ENCODE measurements at regions of chr6 and their contacts with region 1.

Region 1: DNA sequence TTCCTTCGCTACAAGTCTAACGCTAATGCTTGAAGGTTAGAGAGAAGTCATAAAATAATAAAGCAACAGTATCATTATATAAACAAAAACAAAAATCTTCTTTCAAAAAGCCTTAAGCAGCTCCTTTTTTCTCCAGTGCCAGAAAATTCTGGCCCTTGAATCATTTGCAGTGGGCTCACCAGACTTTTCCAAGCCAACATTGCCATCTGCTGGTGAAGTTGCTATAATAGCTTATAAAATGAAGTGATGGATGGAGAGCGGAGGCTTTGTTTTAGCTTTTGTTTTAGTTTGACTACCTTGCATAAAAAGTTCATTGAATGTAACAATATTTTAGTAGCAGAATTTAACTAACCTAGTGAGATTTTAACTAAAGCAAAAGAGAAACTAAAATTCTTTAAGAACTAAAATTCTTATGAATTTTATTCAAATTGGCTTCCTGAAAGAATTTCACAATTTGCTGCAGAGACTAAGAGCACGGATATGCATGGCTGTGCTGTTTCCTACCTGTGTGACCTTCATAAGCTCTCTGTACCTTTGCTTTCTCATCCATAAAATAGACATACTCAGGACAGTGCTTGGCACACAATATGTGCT is 44.8 kb upstream of the SLC2A12 start:
- DNase-seq: peak; percentile 11
- H3K4me3 ChIP-seq: no peak overlapping the region
- H3K27ac ChIP-seq: no peak overlapping the region
- H3K4me1 ChIP-seq: no peaks in the 10 kb centered on the region
- H3K27me3 ChIP-seq: no peaks in the 10 kb centered on the region
- CTCF ChIP-seq: peak; percentile 32 to 60 (median 52)

Region 2: GRCh38 chr6:133923938-133924593 is 173.1 kb before region 1 on chr6:
- dilution Hi-C with region 1: loop called (anchors 10 kb)
- DNase-seq: peak; percentile 33
- H3K4me3 ChIP-seq: no peak overlapping the region
- H3K27ac ChIP-seq: no peak overlapping the region
- H3K4me1 ChIP-seq: no peaks in the 10 kb centered on the region
- H3K27me3 ChIP-seq: no peaks in the 10 kb centered on the region
- CTCF ChIP-seq: peak; percentile 59 to 81 (median 60)

Region 3: GRCh38 chr6:135314543-135314942 is 1217.3 kb after region 1 on chr6:
- dilution Hi-C with region 1: no loop called
- DNase-seq: no peak
- H3K4me3 ChIP-seq: no peak overlapping the region
- H3K27ac ChIP-seq: no peak overlapping the region
- H3K4me1 ChIP-seq: no peaks in the 10 kb centered on the region
- H3K27me3 ChIP-seq: no peaks in the 10 kb centered on the region
- CTCF ChIP-seq: no peak

Measured in keratinocyte (primary cell).